ENCODE measurements at regions of chr5 and their contacts with region 1.

Region 1: DNA sequence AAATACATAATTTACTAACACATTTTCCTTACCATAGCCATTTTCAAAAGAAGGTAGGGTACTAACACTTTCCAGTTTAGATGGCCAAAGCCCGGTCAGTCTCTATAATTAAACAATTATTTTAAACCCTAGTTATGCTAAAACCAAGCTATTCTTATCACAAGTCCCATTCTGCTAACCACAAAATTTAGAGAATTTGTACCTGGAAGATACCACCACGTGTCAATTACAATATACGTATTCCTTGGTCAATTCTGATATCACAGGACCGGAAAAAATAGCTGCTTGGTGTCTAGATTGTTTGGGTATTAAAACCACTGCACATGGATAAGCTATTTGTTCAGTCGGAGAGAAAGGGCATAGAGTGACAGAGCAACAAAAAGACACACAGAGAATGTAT is 18.9 kb upstream of the SKP1 start:
- DNase-seq: no peak
- ATAC-seq: no peak
- H3K4me3 ChIP-seq: no peak overlapping the region
- H3K27ac ChIP-seq: no peak overlapping the region
- H3K4me1 ChIP-seq: no peaks in the 10 kb centered on the region
- H3K27me3 ChIP-seq: no peaks in the 10 kb centered on the region
- CTCF ChIP-seq: no peak
- EP300 ChIP-seq: no peak
- POLR2A ChIP-seq: no peak
- RAD21 ChIP-seq: no peak

Region 2: DNA sequence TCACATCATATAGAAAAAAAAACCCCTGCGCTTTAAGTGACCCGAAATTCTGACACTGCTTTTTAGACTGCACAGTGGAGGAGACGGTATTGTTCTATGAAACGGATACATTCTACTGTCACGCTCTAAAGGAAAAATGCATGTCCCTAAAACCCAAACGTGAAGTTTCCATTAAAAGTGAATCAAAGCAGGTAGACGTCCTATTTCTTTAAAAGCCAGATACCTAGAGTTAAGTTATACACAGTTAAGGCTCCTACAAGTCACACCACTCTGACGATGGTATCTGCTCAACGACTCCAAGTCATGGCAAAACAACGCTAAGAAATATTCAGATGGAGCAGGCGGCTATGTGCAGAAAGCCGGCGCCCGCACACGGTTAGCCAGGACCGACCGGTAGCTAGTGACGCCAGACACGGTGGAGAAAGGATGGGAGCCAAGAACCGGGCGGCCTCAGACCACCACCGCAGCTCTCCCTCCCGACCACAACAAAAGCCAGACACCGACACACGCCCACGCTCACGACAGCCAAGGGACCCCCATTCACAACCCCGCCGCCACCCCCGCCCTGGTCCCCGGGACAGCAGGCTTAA is 19.6 kb before region 1 on chr5:
- CTCF ChIA-PET with region 1: no interaction called
- POLR2A ChIA-PET with region 1: no interaction called
- RAD21 ChIA-PET with region 1: no interaction called
- SMC1A ChIA-PET with region 1: no interaction called
- in situ Hi-C with region 1: no loop called
- intact Hi-C with region 1: no loop called
- DNase-seq: no peak
- ATAC-seq: peak; percentile 56
- H3K4me3 ChIP-seq: peak overlapping the region; percentile 99
- H3K27ac ChIP-seq: peak overlapping the region; percentile 89
- H3K4me1 ChIP-seq: peaks cover 3% of the 10 kb centered on the region
- H3K27me3 ChIP-seq: no peaks in the 10 kb centered on the region
- CTCF ChIP-seq: no peak
- EP300 ChIP-seq: no peak
- POLR2A ChIP-seq: no peak
- RAD21 ChIP-seq: no peak

Region 3: DNA sequence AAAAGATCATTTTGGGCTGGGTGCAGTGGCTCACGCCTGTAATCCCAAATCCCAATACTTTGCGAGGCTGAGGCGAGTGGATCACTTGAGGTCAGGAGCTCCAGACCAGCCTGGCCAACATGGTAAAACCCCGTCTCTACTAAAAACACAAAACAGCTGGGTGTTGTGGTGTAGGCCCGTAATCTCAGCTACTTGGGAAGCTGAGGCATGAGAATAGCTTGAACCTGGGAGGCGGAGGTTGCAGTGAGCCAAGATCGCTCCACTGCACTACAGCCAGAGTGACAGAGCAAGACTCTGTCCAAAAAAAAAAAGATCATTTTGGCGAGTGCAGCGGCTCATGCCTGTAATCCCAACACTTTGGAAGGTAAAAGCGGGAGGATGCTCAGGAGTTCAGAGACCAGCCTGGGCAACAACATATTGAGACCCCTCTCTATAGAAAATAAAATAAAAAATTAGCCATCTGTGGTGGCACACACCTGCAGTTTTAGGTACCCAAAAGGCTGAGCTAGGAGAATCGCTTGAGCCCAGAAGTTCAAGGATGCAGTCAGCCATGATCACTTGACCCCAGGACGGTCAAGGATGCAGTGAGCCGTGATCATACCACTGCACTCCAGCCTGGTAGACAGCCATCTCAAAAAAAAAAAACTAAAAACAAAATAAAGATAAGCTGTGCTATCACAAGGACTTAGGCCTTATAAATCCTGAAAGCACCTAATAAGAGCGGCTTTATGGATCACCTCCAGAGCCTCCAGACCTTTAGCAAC is 14.0 kb after region 1 on chr5:
- CTCF ChIA-PET with region 1: interaction called, 12 read pairs
- POLR2A ChIA-PET with region 1: no interaction called
- RAD21 ChIA-PET with region 1: no interaction called
- SMC1A ChIA-PET with region 1: interaction called, 4 read pairs
- in situ Hi-C with region 1: no loop called
- intact Hi-C with region 1: no loop called
- DNase-seq: no peak
- ATAC-seq: no peak
- H3K4me3 ChIP-seq: no peak overlapping the region; the same call in 1 of the 2 replicates
- H3K27ac ChIP-seq: no peak overlapping the region
- H3K4me1 ChIP-seq: no peaks in the 10 kb centered on the region
- H3K27me3 ChIP-seq: no peaks in the 10 kb centered on the region
- CTCF ChIP-seq: no peak
- EP300 ChIP-seq: no peak
- POLR2A ChIP-seq: no peak
- RAD21 ChIP-seq: no peak

Measured in GM12878 (cell line).